Adrenal gland (tissue), 19 donors: ENCODE measurements at regions of chr1 and their contacts with region 1.

Region 1: GRCh38 chr1:155250633-155251449 is 4.4 kb downstream of the ENTREP3 start:
- DNase-seq: peak; percentile 92 to 97 (median 94)
- H3K4me3 ChIP-seq: peak overlapping the region in 1 of 4 donors; percentile 45
- H3K27ac ChIP-seq: peak overlapping the region in 3 of 5 donors; percentile 58 to 81 (median 59)
- H3K4me1 ChIP-seq: peaks cover 22 to 33% of the 10 kb centered on the region in 2 donors
- H3K27me3 ChIP-seq: no peaks in the 10 kb centered on the region
- CTCF ChIP-seq: peak; percentile 100
- POLR2A ChIP-seq: no peak

Region 2: DNA sequence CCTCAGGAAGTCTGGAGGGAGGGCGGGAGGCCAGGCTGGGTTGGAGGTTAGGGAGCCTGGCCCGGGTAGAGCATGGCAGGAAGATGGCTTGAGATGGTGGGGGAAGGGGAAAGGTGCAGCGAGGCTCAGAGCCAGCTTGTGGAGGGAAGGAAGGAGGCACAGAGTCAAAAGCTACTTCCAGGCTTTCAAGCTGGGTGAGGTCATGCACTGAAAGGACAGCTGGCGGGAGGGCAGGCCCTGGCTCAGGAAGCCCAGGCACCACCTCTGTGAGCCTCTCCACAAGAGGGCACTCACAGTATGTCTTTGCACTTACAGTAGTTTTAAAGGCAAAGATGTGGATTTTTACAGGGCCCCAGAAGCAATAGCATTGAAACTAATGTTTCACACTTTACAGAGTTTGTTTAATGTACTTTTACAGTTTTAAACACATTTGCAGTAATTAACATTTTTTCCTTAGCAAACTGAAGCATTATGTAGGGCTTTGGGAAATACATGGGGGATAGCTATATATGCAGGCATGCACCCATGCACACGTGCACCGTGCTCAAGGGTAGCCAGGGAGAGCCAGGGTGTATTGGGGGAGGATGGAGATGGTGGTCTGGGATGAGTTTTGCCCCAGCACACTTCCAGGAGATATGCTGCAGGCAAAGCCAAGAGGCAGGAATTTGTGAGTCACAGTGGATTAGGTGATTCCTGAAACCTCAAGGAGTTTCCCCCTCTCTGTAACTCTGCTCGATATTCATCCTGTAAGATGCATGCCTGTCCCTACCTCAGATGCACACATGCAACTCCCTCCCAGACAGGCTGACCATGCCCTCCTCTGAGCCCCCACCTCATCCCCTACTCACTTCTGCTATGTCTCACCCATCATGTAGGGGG is 205.8 kb before region 1 on chr1:
- intact Hi-C with region 1: no loop called
- DNase-seq: peak; percentile 85 to 96 (median 91)
- H3K4me3 ChIP-seq: no peak overlapping the region
- H3K27ac ChIP-seq: peak overlapping the region in 3 of 5 donors; percentile 7 to 43 (median 43)
- H3K4me1 ChIP-seq: peaks cover 6 to 16% of the 10 kb centered on the region in 2 donors
- H3K27me3 ChIP-seq: no peaks in the 10 kb centered on the region
- CTCF ChIP-seq: peak; percentile 65 to 85 (median 78)
- POLR2A ChIP-seq: no peak

Region 3: GRCh38 chr1:155158979-155159378 is 91.9 kb before region 1 on chr1:
- intact Hi-C with region 1: no loop called
- DNase-seq: no peak
- H3K4me3 ChIP-seq: no peak overlapping the region
- H3K27ac ChIP-seq: no peak overlapping the region
- H3K4me1 ChIP-seq: no peaks in the 10 kb centered on the region
- H3K27me3 ChIP-seq: no peaks in the 10 kb centered on the region
- CTCF ChIP-seq: no peak
- POLR2A ChIP-seq: no peak

Region 4: GRCh38 chr1:155323798-155324610 is 73.2 kb after region 1 on chr1:
- intact Hi-C with region 1: loop called (anchors 5 kb)
- DNase-seq: peak; percentile 95 to 98 (median 98)
- H3K4me3 ChIP-seq: peak overlapping the region; percentile 20 to 82 (median 79)
- H3K27ac ChIP-seq: peak overlapping the region; percentile 77 to 97 (median 94)
- H3K4me1 ChIP-seq: peaks cover 26 to 43% of the 10 kb centered on the region in 2 donors
- H3K27me3 ChIP-seq: no peaks in the 10 kb centered on the region
- CTCF ChIP-seq: no peak
- POLR2A ChIP-seq: peak; percentile 61 to 65

Region 5: DNA sequence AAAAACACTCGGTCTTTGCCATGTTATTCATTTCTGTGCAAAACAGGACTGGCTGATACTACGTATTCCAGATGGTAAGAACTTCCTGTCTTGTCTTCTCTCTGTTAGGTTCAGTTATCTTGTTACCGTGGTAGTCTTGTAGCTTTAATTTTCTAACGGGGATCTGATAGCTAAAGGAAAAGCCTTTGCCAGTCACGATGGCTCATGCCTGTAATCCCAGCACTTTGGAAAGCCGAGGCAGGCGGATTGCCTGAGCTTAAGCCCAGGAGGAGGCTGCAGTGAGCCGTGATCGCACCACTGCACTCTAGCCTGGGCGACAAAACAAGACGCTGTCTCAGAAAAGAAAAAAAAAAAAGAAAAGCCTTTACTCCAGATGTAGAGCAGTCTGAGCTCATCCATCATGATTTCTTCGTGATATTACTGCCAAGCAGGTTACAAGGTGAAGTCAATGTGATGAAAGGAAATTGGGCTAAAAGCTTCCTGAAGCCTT is 348.0 kb after region 1 on chr1:
- intact Hi-C with region 1: loop called in 1 of 2 experiments (anchors 5 kb)
- DNase-seq: peak in 4 of 7 donors; percentile 25 to 60 (median 40)
- H3K4me3 ChIP-seq: peak overlapping the region in 1 of 4 donors; percentile 40
- H3K27ac ChIP-seq: peak overlapping the region in 1 of 5 donors; percentile 5
- H3K4me1 ChIP-seq: peaks cover 0 to 4% of the 10 kb centered on the region in 2 donors
- H3K27me3 ChIP-seq: no peaks in the 10 kb centered on the region
- CTCF ChIP-seq: no peak
- POLR2A ChIP-seq: no peak